ENCODE measurements at regions of chr6 and their contacts with region 1.

Region 1: GRCh38 chr6:132279592-132280139 is 121.6 kb downstream of the MOXD1 start:
- DNase-seq: peak; percentile 83 to 84
- H3K4me3 ChIP-seq: peak overlapping the region; percentile 27
- H3K4me1 ChIP-seq: no peaks in the 10 kb centered on the region
- H3K27me3 ChIP-seq: no peaks in the 10 kb centered on the region

Region 2: DNA sequence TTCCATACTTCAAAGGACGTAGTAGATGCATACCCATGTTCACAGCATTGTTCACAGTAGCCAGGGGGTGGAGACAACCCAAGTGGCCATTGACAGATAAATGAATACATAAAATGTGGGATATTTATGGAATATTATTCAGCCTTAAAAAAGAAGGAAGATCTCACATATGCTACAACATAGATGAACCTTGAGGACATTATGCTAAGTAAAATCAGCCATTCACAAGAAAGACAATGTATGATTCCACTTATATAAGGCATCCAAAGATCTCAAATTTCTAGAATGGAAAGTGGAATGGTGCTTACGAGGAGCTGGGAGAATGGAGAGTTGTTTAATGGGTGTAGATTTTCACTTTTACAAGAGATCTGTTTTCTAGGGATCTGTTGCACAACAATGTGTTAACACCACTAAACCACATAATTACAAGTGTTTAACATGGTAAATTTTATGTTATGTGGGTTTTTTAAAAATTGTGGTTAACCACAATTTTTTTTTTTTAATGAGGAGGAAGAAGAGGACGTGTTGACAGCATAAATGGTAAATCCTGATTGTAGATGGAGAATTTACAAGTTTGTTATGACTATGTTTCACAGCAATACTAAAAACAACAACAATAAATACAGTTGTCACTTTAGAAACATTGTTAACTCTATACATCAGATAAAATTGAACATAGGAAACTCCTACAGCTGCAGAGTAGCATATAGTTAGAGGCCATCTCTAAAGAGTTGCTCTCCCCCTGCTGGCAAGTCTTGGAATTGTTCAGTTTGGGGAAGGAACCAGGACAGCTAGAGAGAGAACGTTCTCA is 370.1 kb before region 1 on chr6:
- in situ Hi-C with region 1: loop called (anchors 10 kb)
- DNase-seq: peak; percentile 51 to 88
- H3K4me3 ChIP-seq: no peak overlapping the region
- H3K4me1 ChIP-seq: no peaks in the 10 kb centered on the region
- H3K27me3 ChIP-seq: peaks cover 16% of the 10 kb centered on the region

Region 3: GRCh38 chr6:132483779-132484679 is 204.4 kb after region 1 on chr6:
- in situ Hi-C with region 1: loop called (anchors 10 kb)
- DNase-seq: peak; percentile 28 to 63
- H3K4me3 ChIP-seq: no peak overlapping the region
- H3K4me1 ChIP-seq: no peaks in the 10 kb centered on the region
- H3K27me3 ChIP-seq: no peaks in the 10 kb centered on the region

Region 4: DNA sequence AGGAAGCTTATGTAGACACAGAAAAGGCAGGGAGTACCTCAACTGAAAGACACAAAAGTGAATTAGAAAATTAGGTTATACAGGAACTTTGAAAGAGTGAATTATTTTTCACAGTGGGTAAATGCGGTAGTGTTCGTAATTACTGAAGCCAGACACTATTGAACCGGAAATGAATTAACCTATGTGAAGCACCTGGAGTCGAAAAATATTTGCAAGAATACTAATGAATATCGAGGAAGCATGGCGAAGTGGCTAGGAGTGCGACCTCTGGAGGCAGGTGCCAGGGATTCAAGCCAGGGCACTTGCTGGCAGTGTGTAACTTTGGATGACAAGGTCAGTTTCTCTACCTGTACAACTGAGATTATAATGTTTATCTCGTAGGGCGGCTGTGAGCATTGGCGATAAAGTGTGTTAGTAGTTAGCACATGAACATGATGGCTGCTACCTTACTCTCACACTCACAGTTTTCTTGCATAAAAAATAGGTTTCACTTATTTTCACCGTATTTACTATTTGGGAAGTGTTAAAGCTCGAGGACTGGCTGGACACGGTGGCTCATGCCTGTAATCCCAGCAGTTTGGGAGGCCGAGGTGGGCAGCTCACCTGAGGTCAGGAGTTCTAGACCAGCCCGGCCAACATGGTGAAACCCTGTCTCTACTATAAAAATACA is 519.3 kb after region 1 on chr6:
- in situ Hi-C with region 1: loop called (anchors 25 kb)
- DNase-seq: peak; percentile 79 to 84
- H3K4me3 ChIP-seq: peak overlapping the region; percentile 68
- H3K4me1 ChIP-seq: peaks cover 3% of the 10 kb centered on the region
- H3K27me3 ChIP-seq: no peaks in the 10 kb centered on the region

Measured in HAP-1 (cell line).